ENCODE measurements at regions of chr6 and their contacts with region 1.

Region 1: DNA sequence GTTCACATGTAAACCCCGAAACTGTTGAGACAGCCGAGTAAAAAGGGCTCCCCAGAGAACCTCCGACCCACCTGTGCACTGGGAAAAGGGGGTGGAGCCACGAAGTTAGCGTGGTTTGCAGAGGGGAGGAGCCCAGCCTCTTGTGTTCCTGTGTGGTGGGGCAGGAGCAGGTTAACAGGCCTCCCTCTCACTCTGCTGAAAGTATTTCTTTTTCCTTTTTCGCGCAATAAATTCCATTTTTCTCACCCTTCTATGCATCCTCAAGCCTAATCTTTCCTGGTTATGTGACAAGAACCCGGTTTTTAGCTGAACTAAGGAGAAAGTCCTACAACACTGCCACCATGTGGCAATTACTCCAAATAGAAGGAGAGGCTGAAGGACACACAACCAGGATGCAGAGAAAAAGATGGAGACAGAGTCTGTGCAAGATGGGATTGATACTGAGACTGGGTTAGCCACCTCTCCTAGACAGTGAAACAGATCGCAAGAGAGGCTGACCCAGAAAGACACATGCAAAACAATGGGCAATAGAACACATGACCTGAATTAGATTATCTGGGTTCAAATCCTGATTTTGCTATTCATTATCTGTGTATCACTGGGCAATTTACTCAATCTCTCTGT is 168.7 kb upstream of the PRSS16 start:
- DNase-seq: peak; percentile 30
- H3K4me3 ChIP-seq: peak overlapping the region; percentile 22
- H3K27ac ChIP-seq: no peak overlapping the region
- H3K27me3 ChIP-seq: peaks cover 4% of the 10 kb centered on the region
- CTCF ChIP-seq: peak; percentile 74

Region 2: DNA sequence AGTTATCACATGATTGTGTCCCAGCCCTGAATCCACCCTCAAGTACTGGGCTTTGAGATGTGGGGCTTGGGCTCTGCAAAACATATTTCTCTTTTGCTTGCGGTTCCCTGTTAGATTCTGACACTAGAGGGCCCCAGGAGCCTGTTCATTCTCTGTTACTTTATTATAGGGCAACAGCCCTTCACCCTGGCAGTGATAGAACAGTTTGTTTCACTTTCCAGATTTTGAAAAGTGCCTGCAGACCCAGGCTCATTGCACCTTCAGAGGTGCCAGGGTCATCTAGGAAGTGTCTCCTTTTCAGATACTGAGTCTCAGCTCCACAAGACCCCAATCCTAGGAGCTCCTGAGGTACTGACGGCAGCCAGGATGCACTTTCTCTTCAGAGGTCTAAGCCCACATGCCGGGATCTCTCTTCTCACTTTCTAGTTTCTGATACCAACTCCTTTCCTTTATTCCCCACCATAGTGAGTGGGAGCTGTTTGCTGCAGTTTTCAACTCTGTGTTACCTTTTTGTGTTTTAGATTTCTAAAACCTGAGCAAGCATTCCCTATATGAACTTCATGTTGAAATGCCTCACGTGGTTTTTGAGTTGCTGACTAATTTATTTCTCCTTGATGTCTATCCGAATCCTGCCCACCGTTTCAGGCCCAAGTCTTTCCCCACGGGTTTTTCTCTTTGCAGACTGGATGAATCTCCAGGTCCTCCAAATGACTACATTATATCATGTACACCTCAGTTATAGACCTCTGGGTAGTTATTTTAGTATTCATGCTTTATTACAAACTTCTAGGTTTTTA is 471.2 kb before region 1 on chr6:
- CTCF ChIA-PET with region 1: interaction called, 59 read pairs
- POLR2A ChIA-PET with region 1: no interaction called
- DNase-seq: peak; percentile 24
- H3K4me3 ChIP-seq: peak overlapping the region; percentile 39
- H3K27ac ChIP-seq: no peak overlapping the region
- H3K27me3 ChIP-seq: peaks cover 16% of the 10 kb centered on the region
- CTCF ChIP-seq: peak; percentile 91

Region 3: DNA sequence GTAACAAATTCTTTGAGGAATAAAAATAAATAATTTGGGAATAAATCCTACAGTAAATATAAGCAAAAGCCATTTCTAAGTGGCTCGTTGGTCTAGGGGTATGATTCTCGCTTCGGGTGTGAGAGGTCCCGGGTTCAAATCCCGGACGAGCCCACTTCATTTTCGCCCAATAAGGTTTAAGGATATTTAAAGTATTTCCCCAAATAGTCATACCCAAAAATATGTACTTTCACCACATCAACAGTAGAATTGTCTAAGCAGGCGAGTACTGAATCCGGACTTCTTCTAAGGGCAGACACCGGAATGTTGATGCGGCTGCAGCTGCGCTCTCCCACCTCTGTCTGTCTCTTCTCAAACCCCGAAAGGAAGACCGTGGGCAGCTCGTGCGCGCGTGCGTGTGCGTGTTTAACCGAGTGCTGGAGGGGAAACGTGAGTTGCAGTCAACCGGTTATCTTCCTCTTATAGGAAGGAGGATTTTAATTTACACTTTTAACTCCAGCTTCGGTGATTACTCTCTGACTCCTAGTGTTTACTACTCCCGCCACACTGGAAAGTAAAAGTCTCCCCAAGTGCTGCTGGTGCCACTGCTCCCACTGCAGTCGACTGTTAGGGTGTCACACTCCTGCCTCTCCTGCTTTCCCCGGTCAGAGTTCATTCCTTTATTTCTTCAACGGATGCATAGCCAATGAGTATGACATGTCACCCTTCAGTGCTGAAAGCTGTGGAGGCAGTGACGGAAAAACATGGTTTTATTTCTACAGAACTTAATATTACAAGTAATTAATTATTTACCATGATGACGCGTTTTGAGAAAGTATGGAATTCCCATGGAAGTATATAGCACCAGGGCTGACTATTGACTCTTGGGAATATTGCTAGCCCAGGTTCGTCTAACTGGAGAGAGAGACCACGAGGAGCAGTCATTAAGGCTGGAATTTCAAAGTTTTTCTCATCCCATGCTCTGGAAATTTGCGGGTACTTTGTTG is 13.1 kb after region 1 on chr6:
- CTCF ChIA-PET with region 1: interaction called, 11 read pairs
- POLR2A ChIA-PET with region 1: no interaction called
- DNase-seq: peak; percentile 80
- H3K4me3 ChIP-seq: peak overlapping the region; percentile 62
- H3K27ac ChIP-seq: no peak overlapping the region
- H3K27me3 ChIP-seq: no peaks in the 10 kb centered on the region
- CTCF ChIP-seq: no peak

Measured in AG04450 (cell line).